HepG2 (cell line): ENCODE measurements at regions of chr19 and their contacts with region 1.

Region 1: DNA sequence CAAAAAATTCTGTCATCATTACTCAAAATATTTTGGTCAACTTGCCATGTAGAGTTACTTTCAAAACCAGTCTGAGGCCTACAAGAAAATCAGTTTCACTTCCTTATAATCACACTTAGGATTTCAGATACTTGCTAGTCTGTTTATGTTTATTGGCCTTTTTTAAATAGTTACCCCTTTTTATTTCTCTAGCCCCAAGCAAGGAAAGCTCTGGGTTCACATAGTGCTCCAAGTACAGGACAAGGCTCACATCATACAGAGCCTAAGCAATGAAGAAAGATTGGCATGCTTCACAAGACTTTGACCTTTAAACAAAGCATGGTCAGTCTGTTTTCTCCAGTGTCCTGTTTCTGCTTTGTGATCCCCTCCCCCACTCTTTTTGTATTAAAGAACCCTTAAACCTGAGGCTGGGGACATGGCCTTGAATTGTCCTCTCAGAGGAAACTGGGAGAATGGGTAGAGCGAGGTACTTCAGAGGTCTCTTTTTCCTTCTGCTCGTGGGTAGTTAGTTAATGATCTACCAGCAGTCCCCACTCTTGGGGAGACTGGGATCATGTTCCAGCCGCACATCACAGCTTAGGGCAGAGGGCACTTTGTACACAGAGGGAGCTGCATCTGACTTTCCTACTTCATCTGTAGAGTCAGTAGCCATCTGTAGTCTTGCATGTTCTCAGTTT is 30.7 kb downstream of the CEACAM1 start:
- DNase-seq: peak; percentile 98
- ATAC-seq: peak; percentile 99
- H3K4me3 ChIP-seq: peak overlapping the region in 2 of 3 experiments; percentile 36 to 44; a peak in 3 of 6 replicates
- H3K27ac ChIP-seq: peak overlapping the region; percentile 93
- H3K4me1 ChIP-seq: peaks cover 81% of the 10 kb centered on the region
- H3K27me3 ChIP-seq: no peaks in the 10 kb centered on the region
- CTCF ChIP-seq: peak; percentile 12; the same call in 1 of the 2 replicates
- EP300 ChIP-seq: peak; percentile 43 to 81; a peak in 2 of 4 replicates
- POLR2A ChIP-seq: peak; percentile 86 to 90
- RAD21 ChIP-seq: no peak

Region 2: DNA sequence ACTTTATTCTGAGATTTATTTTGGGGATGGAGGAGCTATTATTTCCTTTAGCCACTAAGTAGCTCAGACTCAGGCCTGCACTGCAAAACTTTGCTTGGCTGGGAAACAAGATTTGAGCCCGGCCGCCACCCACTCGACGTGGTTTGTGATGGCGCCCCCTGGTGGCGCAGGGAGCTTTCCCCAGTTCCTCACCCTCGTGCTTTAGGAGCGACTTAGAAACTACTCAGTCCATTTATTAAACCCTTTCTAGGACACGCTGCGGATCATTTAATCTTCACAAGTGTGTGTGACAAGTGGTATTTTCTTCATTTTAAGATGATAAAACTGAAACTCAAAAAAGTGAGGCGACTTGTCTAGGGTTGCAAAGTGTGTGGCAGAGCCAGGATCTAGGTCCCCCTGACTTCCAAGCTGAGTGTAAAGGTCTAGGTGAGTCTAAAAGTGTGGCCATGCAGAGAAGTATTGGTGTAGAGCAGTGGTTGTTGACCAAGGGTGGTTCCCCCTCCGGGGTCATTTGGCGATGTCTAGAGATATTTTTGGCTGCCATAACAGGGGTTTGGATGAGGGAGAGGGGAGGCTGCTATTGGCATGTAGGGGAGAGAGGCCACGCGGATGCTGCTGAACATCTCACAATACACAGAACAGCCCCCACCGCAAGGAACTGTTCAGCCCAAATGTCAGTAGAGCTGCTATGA is 57.1 kb before region 1 on chr19:
- CTCF ChIA-PET with region 1: no interaction called
- POLR2A ChIA-PET with region 1: interaction called, 12 read pairs
- in situ Hi-C with region 1: no loop called
- intact Hi-C with region 1: no loop called
- DNase-seq: peak; percentile 57
- ATAC-seq: peak; percentile 42
- H3K4me3 ChIP-seq: peak overlapping the region; percentile 20 to 52 (median 32); a peak in 4 of 6 replicates
- H3K27ac ChIP-seq: peak overlapping the region; percentile 41
- H3K4me1 ChIP-seq: peaks cover 85% of the 10 kb centered on the region
- H3K27me3 ChIP-seq: no peaks in the 10 kb centered on the region
- CTCF ChIP-seq: peak; percentile 82
- EP300 ChIP-seq: no peak
- POLR2A ChIP-seq: no peak
- RAD21 ChIP-seq: 0 out of 2 replicates have a peak, but pooled peaks have one; percentile 11

Region 3: GRCh38 chr19:42465827-42466280 is 31.8 kb before region 1 on chr19:
- CTCF ChIA-PET with region 1: no interaction called
- POLR2A ChIA-PET with region 1: interaction called, 25 read pairs
- in situ Hi-C with region 1: no loop called
- intact Hi-C with region 1: loop called (anchors 5 kb)
- DNase-seq: no peak
- ATAC-seq: no peak
- H3K4me3 ChIP-seq: no peak overlapping the region
- H3K27ac ChIP-seq: no peak overlapping the region
- H3K4me1 ChIP-seq: peaks cover 73% of the 10 kb centered on the region
- H3K27me3 ChIP-seq: no peaks in the 10 kb centered on the region
- CTCF ChIP-seq: no peak
- EP300 ChIP-seq: no peak
- POLR2A ChIP-seq: no peak
- RAD21 ChIP-seq: no peak

Region 4: DNA sequence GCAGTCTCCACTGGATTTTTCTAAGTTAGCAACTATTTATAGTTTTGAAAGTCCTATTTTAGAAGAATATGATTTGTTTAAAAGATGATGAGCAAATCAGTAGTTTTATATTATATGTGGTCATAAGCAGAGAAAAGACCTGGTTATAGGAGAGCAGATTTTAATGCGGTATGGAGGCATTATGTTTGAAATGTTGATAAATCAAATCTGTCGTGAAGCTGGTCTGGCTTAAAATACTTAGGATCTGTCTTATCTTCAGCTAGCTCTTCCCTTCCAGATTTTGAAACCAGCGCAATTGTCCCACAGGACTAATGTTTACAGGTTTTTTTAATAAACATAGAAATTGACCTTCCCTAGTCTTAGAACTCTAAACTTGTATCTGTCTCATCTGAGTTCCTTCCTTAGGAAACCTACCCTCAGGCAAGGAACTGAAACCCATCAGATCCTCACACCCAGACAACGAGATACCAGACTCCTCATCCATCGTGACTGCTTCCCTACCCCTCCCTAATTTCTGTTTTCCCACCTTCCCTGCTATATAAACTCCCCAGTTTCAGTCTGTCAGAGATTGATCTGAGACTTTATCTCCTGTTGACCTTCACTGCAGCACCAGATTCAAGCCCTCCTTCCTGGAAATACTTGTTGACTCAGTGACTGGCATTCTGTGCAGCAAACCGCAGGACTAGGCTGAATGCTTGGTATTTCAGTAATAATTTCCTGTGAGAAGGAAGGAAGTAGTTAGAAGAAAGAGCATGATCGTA is 17.1 kb before region 1 on chr19:
- CTCF ChIA-PET with region 1: no interaction called
- POLR2A ChIA-PET with region 1: interaction called, 12 read pairs
- in situ Hi-C with region 1: no loop called
- intact Hi-C with region 1: no loop called
- DNase-seq: peak; percentile 93
- ATAC-seq: peak; percentile 82
- H3K4me3 ChIP-seq: no peak overlapping the region; a peak in 1 of 6 replicates
- H3K27ac ChIP-seq: peak overlapping the region; percentile 70
- H3K4me1 ChIP-seq: peaks cover 66% of the 10 kb centered on the region
- H3K27me3 ChIP-seq: no peaks in the 10 kb centered on the region
- CTCF ChIP-seq: no peak
- EP300 ChIP-seq: peak in 1 of 2 experiments; percentile 94; a peak in 2 of 4 replicates
- POLR2A ChIP-seq: no peak
- RAD21 ChIP-seq: no peak

Region 5: DNA sequence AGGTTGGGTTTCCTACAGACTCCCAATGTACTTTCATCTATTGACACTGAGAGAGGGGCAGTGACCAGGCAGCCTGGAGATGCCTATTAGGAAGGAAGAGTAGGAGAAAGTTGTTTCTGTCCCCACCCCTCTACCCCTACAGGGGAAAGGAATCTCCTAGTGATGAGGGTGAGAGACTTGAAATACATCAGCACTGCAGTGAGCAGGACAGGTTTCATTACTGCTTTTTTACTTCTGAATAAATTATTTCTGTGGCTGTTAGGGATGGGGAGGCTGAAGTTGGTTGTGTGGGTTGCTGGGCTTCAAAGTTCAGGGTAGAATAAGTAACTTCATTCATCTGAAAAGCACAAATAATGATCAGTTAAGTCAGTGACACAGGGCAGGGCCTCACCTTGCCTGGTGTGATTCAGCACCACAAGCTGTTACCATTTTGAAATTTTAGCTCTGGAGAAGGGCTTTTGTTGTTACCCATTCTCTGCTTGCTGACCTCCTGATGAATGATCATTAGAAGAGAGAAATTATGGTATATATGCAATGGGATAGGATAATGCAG is 11.3 kb after region 1 on chr19:
- CTCF ChIA-PET with region 1: no interaction called
- POLR2A ChIA-PET with region 1: interaction called, 44 read pairs
- in situ Hi-C with region 1: no loop called
- intact Hi-C with region 1: no loop called
- DNase-seq: no peak
- ATAC-seq: no peak
- H3K4me3 ChIP-seq: no peak overlapping the region
- H3K27ac ChIP-seq: no peak overlapping the region
- H3K4me1 ChIP-seq: peaks cover 31% of the 10 kb centered on the region
- H3K27me3 ChIP-seq: no peaks in the 10 kb centered on the region
- CTCF ChIP-seq: no peak
- EP300 ChIP-seq: no peak
- POLR2A ChIP-seq: no peak
- RAD21 ChIP-seq: no peak